OCI-LY7 (cell line): ENCODE measurements at regions of chr18 and their contacts with region 1.

Region 1: GRCh38 chr18:3703732-3704176 is 253.8 kb downstream of the TGIF1 start:
- DNase-seq: peak; percentile 65
- H3K4me3 ChIP-seq: no peak overlapping the region
- H3K27ac ChIP-seq: no peak overlapping the region
- H3K4me1 ChIP-seq: peaks cover 5% of the 10 kb centered on the region
- CTCF ChIP-seq: peak; percentile 79

Region 2: DNA sequence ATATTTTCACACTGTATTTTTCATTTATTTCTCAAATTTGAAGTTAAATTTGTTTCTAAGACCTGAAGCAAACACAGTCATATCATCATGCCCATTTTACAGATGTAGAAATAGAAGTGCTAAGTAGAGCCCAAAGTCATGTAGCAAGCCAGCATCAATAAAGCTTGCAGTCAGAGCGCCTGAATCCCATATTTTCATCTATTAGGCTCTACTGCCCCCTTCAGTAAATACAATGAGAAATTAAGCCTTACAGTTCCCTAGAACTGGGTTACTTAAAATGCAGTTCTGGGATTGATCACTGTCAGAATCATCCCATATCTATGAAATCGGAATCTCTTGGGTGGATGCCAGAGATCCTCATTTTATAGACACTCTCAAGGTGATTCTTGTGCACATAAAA is 166.1 kb after region 1 on chr18:
- CTCF ChIA-PET with region 1: no interaction called
- POLR2A ChIA-PET with region 1: no interaction called
- intact Hi-C with region 1: loop called (anchors 5 kb)
- DNase-seq: peak; percentile 56
- H3K4me3 ChIP-seq: no peak overlapping the region
- H3K27ac ChIP-seq: no peak overlapping the region
- H3K4me1 ChIP-seq: peaks cover 7% of the 10 kb centered on the region
- CTCF ChIP-seq: peak; percentile 76

Region 3: GRCh38 chr18:4068552-4069158 is 364.9 kb after region 1 on chr18:
- CTCF ChIA-PET with region 1: no interaction called
- POLR2A ChIA-PET with region 1: no interaction called
- intact Hi-C with region 1: loop called (anchors 5 kb)
- DNase-seq: peak; percentile 67
- H3K4me3 ChIP-seq: no peak overlapping the region
- H3K27ac ChIP-seq: no peak overlapping the region
- H3K4me1 ChIP-seq: no peaks in the 10 kb centered on the region
- CTCF ChIP-seq: peak; percentile 94